ENCODE measurements at regions of chr15 and their contacts with region 1.

Region 1: GRCh38 chr15:70474471-70475396 is 288.6 kb downstream of the UACA start:
- DNase-seq: peak; percentile 79 to 97
- H3K4me3 ChIP-seq: peak overlapping the region; percentile 16 to 48
- H3K27ac ChIP-seq: peak overlapping the region; percentile 91
- H3K4me1 ChIP-seq: peaks cover 11 to 16% of the 10 kb centered on the region in 2 donors
- H3K27me3 ChIP-seq: no peaks in the 10 kb centered on the region
- CTCF ChIP-seq: no peak

Region 2: DNA sequence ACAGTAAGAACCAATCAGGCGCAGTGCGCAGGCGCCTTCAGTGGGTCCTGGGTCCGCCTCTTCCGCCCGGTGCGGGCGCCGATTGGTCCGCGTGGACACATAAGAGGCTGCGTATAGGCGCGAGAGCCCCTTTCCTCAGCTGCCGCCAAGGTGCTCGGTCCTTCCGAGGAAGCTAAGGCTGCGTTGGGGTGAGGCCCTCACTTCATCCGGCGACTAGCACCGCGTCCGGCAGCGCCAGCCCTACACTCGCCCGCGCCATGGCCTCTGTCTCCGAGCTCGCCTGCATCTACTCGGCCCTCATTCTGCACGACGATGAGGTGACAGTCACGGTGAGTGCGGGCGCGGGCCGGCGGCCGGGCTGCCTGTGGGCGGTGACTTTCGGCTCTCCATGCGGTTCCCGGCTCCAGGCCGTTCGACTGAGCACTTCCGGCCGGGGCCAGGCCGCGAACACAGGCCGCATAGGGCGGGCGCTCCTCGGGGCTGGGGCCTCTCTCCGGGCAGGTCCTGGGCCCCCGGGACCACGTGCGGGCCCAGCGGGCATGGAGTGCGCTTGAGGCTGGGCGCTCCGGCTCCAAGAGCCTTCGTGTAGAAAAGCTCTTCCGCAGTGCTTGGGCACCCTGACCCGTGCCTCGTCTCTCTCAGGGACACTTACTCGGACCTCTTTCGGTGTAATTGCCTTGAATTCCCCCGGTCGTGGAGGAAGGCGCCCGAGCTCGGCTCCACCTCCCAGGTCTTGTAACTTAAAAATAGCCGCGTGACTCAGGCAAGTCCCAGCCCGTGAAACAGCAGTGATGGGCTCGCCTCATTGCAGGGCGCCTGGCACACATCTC is 1021.8 kb before region 1 on chr15 and contains the start of gene RPLP1:
- intact Hi-C with region 1: loop called (anchors 10 kb)
- DNase-seq: peak; percentile 88 to 98
- H3K4me3 ChIP-seq: peak within 1 kb of the TSS; percentile 87 to 89
- H3K27ac ChIP-seq: peak within 1 kb of the TSS; percentile 96 to 97
- H3K4me1 ChIP-seq: peaks cover 8 to 17% of the 10 kb centered on the region in 2 donors
- H3K27me3 ChIP-seq: no peaks in the 10 kb centered on the region
- CTCF ChIP-seq: no peak
- total RNA-seq, gene RPLP1: 379 TPM

Region 3: GRCh38 chr15:70196314-70197291 is 278.1 kb before region 1 on chr15:
- intact Hi-C with region 1: loop called (anchors 5 kb)
- DNase-seq: no peak
- H3K4me3 ChIP-seq: no peak overlapping the region
- H3K27ac ChIP-seq: peak overlapping the region; percentile 77 to 85
- H3K4me1 ChIP-seq: peaks cover 4 to 20% of the 10 kb centered on the region in 2 donors
- H3K27me3 ChIP-seq: no peaks in the 10 kb centered on the region
- CTCF ChIP-seq: no peak

Region 4: DNA sequence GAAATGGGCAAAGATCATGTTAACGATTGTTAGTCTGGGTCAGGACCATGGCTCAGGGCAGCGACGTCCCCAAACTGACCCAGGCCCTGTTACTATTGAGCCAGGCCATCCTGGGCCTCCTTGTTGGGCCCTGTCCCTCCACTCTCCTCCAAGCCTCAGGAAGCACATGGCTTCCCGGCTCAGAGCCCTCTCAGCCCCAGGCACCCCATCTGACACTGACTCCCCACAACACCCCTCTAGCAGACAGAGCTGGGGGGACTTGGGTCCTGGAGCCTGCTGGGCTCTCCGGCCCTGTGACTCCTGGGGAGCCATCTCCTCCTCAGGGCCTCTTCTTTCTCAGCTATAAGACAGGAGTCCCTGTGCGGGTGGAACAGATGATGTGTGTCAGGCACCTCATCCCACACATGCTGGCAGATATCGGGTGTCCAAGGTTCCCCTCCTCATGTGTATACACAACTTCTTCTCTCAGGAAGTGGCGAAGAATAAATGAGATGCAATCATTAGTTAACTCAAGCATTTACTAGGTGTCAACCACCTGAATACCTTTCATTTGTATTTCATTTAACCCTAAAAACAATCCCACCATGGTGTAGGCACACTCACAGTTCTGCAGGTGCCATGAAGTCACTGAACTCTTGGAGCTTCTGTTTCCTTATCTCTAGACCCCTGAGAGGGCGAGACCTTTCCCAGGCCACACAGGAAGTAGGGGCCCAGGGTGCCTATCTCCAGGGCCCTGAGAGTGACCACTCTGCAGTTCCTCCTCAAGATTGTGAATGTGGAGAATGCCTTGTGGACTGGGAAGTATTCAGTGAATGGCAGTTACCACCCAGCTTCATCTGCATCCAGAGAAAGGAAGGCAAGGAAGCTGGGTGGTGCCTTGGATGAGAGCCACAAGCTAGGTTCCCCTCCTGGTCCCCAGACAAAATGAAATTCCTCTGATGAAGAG is 94.5 kb before region 1 on chr15:
- intact Hi-C with region 1: no loop called
- DNase-seq: no peak
- H3K4me3 ChIP-seq: no peak overlapping the region
- H3K27ac ChIP-seq: no peak overlapping the region
- H3K4me1 ChIP-seq: peaks cover 0 to 20% of the 10 kb centered on the region in 2 donors
- H3K27me3 ChIP-seq: no peaks in the 10 kb centered on the region
- CTCF ChIP-seq: no peak

Region 5: GRCh38 chr15:70545526-70545925 is 70.8 kb after region 1 on chr15:
- intact Hi-C with region 1: no loop called
- DNase-seq: peak in 1 of 2 donors; percentile 16
- H3K4me3 ChIP-seq: no peak overlapping the region
- H3K27ac ChIP-seq: no peak overlapping the region
- H3K4me1 ChIP-seq: no peaks in the 10 kb centered on the region
- H3K27me3 ChIP-seq: no peaks in the 10 kb centered on the region
- CTCF ChIP-seq: no peak

Measured in ascending aorta (tissue), 2 donors.